ENCODE measurements at regions of chr4 and their contacts with region 1.

Region 1: GRCh38 chr4:103019308-103020124 is at the start of gene SLC9B1:
- DNase-seq: peak; percentile 92 to 95
- ATAC-seq: peak; percentile 93 to 98 (median 95)
- H3K4me3 ChIP-seq: peak within 1 kb of the TSS; percentile 61
- H3K4me3 Mint-ChIP-seq: peak within 1 kb of the TSS; percentile 94
- H3K27ac ChIP-seq: peak within 1 kb of the TSS; percentile 93
- H3K27ac Mint-ChIP-seq: peak within 1 kb of the TSS in 1 of 2 donors; percentile 95
- H3K4me1 ChIP-seq: peaks cover 20% of the 10 kb centered on the region
- H3K4me1 Mint-ChIP-seq: peaks cover 12 to 13% of the 10 kb centered on the region in 2 donors
- H3K27me3 ChIP-seq: no peaks in the 10 kb centered on the region
- H3K27me3 Mint-ChIP-seq: no peaks in the 10 kb centered on the region
- CTCF ChIP-seq: no peak
- total RNA-seq, gene SLC9B1: 2.1 to 4.0 (median 2.5) TPM

Region 2: DNA sequence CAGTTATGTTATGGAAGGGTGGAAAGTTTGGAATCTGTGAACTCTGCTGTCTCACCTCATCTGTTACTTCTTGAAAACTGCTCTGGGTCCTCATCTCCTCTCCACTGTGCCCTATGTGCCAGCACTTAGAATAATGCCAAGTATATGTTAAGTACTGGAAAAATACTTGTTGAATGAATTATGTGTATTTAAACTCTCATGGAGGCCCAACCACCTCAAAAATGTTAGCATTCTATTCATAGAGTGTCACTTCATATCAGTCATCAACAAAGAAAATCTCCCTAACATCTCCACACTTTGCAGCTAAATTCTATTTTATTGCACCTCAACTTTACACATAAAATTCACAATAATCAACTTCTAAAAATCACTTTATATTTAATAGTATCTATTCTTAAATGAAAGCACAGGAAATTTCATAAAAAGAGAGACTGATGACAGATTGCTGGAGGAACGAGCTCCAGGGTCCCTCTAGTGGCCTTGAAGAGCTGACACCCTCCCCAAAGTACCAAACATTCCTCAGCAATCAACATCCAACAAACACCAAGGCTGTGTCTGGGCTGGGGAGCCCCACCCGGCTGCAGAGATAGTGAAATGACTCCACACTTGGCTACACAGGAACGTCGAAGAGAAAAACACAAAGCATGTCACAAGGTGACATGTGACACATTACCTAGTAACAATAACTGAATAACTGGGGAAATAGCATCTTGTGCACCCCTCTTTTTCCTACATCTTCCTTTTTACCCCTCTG is 720.0 kb before region 1 on chr4:
- intact Hi-C with region 1: no loop called
- DNase-seq: peak in 1 of 2 donors; percentile 56
- ATAC-seq: peak in 2 of 3 donors; percentile 64 to 67
- H3K4me3 ChIP-seq: no peak overlapping the region
- H3K4me3 Mint-ChIP-seq: no peak overlapping the region
- H3K27ac ChIP-seq: no peak overlapping the region
- H3K27ac Mint-ChIP-seq: no peak overlapping the region
- H3K4me1 ChIP-seq: no peaks in the 10 kb centered on the region
- H3K4me1 Mint-ChIP-seq: peaks cover 0 to 10% of the 10 kb centered on the region in 2 donors
- H3K27me3 ChIP-seq: no peaks in the 10 kb centered on the region
- H3K27me3 Mint-ChIP-seq: no peaks in the 10 kb centered on the region
- CTCF ChIP-seq: peak; percentile 59

Region 3: GRCh38 chr4:102760645-102761295 is 258.7 kb before region 1 on chr4 and contains the start of gene MANBA:
- intact Hi-C with region 1: loop called (anchors 1 kb)
- DNase-seq: peak; percentile 72 to 89
- ATAC-seq: peak; percentile 88 to 95 (median 90)
- H3K4me3 ChIP-seq: peak within 1 kb of the TSS; percentile 96
- H3K4me3 Mint-ChIP-seq: peak within 1 kb of the TSS; percentile 96
- H3K27ac ChIP-seq: peak within 1 kb of the TSS; percentile 95
- H3K27ac Mint-ChIP-seq: peak within 1 kb of the TSS; percentile 80 to 87
- H3K4me1 ChIP-seq: peaks cover 19% of the 10 kb centered on the region
- H3K4me1 Mint-ChIP-seq: peaks cover 35 to 36% of the 10 kb centered on the region in 2 donors
- H3K27me3 ChIP-seq: no peaks in the 10 kb centered on the region
- H3K27me3 Mint-ChIP-seq: peaks cover 3 to 6% of the 10 kb centered on the region in 2 donors
- CTCF ChIP-seq: no peak
- total RNA-seq, gene MANBA: 38.1 to 43.2 (median 40.8) TPM

Region 4: GRCh38 chr4:102868781-102869568 is 150.5 kb before region 1 on chr4 and contains the start of gene CISD2:
- intact Hi-C with region 1: loop called (anchors 1 kb)
- DNase-seq: peak; percentile 92 to 96
- ATAC-seq: peak; percentile 83 to 95 (median 87)
- H3K4me3 ChIP-seq: peak within 1 kb of the TSS; percentile 76
- H3K4me3 Mint-ChIP-seq: peak within 1 kb of the TSS; percentile 93
- H3K27ac ChIP-seq: peak within 1 kb of the TSS; percentile 96
- H3K27ac Mint-ChIP-seq: peak within 1 kb of the TSS; percentile 97 to 99
- H3K4me1 ChIP-seq: peaks cover 16% of the 10 kb centered on the region
- H3K4me1 Mint-ChIP-seq: peaks cover 19 to 24% of the 10 kb centered on the region in 2 donors
- H3K27me3 ChIP-seq: no peaks in the 10 kb centered on the region
- H3K27me3 Mint-ChIP-seq: no peaks in the 10 kb centered on the region
- CTCF ChIP-seq: no peak
- total RNA-seq, gene CISD2: 11.2 to 13.8 (median 13.5) TPM

Region 5: GRCh38 chr4:103075901-103076739 is 56.6 kb after region 1 on chr4:
- intact Hi-C with region 1: loop called (anchors 2 kb)
- DNase-seq: peak; percentile 68 to 79
- ATAC-seq: peak; percentile 82 to 91 (median 83)
- H3K4me3 ChIP-seq: peak overlapping the region; percentile 65
- H3K4me3 Mint-ChIP-seq: peak overlapping the region; percentile 88
- H3K27ac ChIP-seq: peak overlapping the region; percentile 88
- H3K27ac Mint-ChIP-seq: peak overlapping the region; percentile 90 to 92
- H3K4me1 ChIP-seq: peaks cover 18% of the 10 kb centered on the region
- H3K4me1 Mint-ChIP-seq: peaks cover 24 to 35% of the 10 kb centered on the region in 2 donors
- H3K27me3 ChIP-seq: no peaks in the 10 kb centered on the region
- H3K27me3 Mint-ChIP-seq: no peaks in the 10 kb centered on the region
- CTCF ChIP-seq: no peak

Measured in natural killer cell (primary cell).